Activated naive CD4-positive, alpha-beta T cell treated with anti-CD3 and anti-CD28 coated beads, Interleukin-2, amount 10 ng/mL, durations not matched to agents 7 days and 5 days (primary cell): ENCODE measurements at regions of chr1 and their contacts with region 1.

Region 1: GRCh38 chr1:27102707-27103491 is 52.0 kb downstream of the SLC9A1 start:
- DNase-seq: peak; percentile 85
- H3K4me3 Mint-ChIP-seq: no peak overlapping the region
- H3K27ac Mint-ChIP-seq: peak overlapping the region; percentile 39
- H3K4me1 Mint-ChIP-seq: peaks cover 2% of the 10 kb centered on the region
- H3K27me3 Mint-ChIP-seq: no peaks in the 10 kb centered on the region

Region 2: DNA sequence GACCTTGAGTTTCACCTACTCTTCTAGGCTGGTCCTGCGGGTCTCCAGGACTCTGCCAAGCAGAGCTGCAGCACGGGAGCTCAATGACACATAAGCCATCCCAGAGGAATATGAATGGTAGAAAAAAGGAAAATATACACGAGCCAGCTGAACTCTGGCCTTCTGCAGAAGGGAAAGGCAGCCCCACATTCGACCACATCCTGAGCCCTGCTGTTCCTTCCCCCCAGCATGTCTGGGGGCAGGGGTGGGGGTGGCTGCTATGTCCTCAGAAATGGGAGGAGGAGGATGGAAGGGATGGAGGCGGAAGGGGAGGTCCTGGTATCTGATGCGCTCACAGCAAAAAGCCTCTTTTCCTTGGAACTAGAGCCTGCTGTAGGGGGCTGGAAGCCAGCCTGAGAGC is 130.5 kb before region 1 on chr1:
- CTCF ChIA-PET with region 1: no interaction called
- DNase-seq: no peak
- H3K4me3 Mint-ChIP-seq: no peak overlapping the region
- H3K27ac Mint-ChIP-seq: no peak overlapping the region
- H3K4me1 Mint-ChIP-seq: peaks cover 7% of the 10 kb centered on the region
- H3K27me3 Mint-ChIP-seq: peaks cover 35% of the 10 kb centered on the region

Region 3: DNA sequence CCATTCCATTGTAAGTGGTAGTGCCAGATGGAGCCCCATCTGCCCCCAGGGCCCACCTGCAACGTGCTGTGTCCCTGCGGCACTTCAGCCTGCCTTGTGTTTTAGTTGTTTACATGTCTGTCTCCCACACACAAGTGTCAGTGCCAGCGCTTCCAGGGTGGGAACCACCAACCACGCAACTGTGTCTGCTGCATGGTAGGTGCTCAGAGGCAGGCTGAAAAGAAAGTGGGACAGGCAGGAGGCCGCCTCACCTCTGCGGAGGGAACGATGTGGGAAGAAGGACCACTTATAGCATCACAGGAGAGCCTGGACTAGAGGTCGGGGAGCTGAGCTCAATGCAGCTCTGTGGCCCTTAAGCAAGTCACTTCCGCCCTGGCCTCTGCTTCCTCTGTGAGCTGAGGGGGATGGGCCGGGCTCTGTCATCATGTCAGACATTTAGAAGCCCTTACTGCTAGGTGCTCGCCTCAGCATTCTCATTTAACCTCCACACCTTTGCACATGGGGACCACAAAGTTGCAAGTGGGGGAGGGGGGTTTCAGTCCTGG is 34.2 kb after region 1 on chr1:
- CTCF ChIA-PET with region 1: interaction called, 10 read pairs
- DNase-seq: peak; percentile 91
- H3K4me3 Mint-ChIP-seq: peak overlapping the region; percentile 74
- H3K27ac Mint-ChIP-seq: peak overlapping the region; percentile 99
- H3K4me1 Mint-ChIP-seq: peaks cover 46% of the 10 kb centered on the region
- H3K27me3 Mint-ChIP-seq: no peaks in the 10 kb centered on the region